Gastrocnemius medialis (tissue), 4 donors: ENCODE measurements at regions of chr2 and their contacts with region 1.

Region 1: GRCh38 chr2:196076778-196077568 is 8.3 kb upstream of the DNAH7 start:
- DNase-seq: no peak
- ATAC-seq: no peak
- H3K4me3 ChIP-seq: no peak overlapping the region
- H3K27ac ChIP-seq: no peak overlapping the region
- H3K4me1 ChIP-seq: no peaks in the 10 kb centered on the region
- H3K27me3 ChIP-seq: no peaks in the 10 kb centered on the region
- CTCF ChIP-seq: no peak
- POLR2A ChIP-seq: no peak

Region 2: GRCh38 chr2:196277002-196277401 is 200.0 kb after region 1 on chr2:
- in situ Hi-C with region 1: loop called in 3 of 4 experiments (anchors 10 to 25 kb)
- intact Hi-C with region 1: loop called (anchors 2 kb)
- DNase-seq: no peak
- ATAC-seq: no peak
- H3K4me3 ChIP-seq: no peak overlapping the region
- H3K27ac ChIP-seq: no peak overlapping the region
- H3K4me1 ChIP-seq: peaks cover 0 to 6% of the 10 kb centered on the region in 2 donors
- H3K27me3 ChIP-seq: no peaks in the 10 kb centered on the region
- CTCF ChIP-seq: peak in 4 of 5 experiments; percentile 6 to 46 (median 25)
- POLR2A ChIP-seq: no peak

Region 3: DNA sequence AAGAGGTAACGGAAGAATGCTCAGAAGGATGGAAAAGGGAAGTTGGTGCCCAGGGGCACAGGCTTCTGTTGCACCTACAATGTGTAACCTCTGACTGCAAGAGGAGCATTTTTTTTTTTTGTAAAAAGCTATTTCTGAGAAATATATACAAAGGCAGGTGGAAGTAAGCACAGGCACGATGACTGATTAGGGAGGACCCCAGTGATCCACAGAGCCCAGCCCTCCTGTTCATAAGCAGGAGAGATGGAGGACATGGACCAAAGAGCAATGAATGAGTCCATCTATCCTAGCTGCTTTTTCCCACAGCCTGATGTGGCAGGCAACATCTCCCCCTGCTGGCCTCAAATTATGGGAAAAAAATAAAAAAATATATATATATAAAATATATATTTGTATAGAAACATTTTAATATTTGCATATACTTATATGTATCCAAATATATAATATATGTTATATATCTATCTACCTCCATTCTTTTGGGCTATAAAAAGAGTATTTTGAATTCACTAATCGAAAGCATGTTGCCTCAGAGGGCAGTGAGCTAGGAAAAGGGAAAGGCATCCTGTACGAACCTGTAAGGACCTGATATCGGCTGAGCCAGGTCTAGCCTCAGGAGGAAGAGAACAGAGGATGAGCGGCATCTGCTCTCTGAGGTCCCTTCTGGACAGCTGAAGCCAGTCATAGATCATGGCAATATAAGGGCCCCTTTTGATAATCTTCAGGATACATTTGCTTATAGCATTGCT is 260.4 kb after region 1 on chr2:
- in situ Hi-C with region 1: loop called in 1 of 4 experiments (anchors 25 kb)
- intact Hi-C with region 1: loop called (anchors 2 kb)
- DNase-seq: no peak
- ATAC-seq: no peak
- H3K4me3 ChIP-seq: no peak overlapping the region
- H3K27ac ChIP-seq: no peak overlapping the region
- H3K4me1 ChIP-seq: no peaks in the 10 kb centered on the region
- H3K27me3 ChIP-seq: no peaks in the 10 kb centered on the region
- CTCF ChIP-seq: peak in 2 of 5 experiments; percentile 26 to 39
- POLR2A ChIP-seq: no peak

Region 4: DNA sequence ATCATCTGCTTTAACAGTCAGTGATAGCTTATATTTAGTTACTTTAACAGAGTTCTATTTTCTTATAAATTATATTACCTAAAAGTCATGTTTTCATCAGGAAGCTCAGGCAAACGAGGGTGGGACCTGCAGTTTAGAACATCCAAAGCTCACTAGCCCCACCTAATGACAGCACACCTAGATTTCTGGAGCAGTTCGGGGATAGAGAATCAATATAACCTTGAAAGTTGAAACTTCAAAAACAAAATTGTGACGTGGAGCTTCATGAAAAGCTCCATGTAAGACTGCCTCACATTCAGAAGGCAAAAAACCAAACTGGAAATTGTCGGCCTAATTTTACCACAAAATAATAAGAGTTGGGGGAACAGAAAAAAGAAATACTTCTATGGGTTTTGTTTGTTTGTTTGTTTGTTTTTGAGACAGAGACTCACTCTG is 376.7 kb after region 1 on chr2:
- in situ Hi-C with region 1: loop called in 1 of 4 experiments (anchors 25 kb)
- intact Hi-C with region 1: loop called (anchors 10 kb)
- DNase-seq: no peak
- ATAC-seq: no peak
- H3K4me3 ChIP-seq: no peak overlapping the region
- H3K27ac ChIP-seq: no peak overlapping the region
- H3K4me1 ChIP-seq: no peaks in the 10 kb centered on the region
- H3K27me3 ChIP-seq: no peaks in the 10 kb centered on the region
- CTCF ChIP-seq: peak in 3 of 5 experiments; percentile 19 to 46 (median 37)
- POLR2A ChIP-seq: no peak

Region 5: GRCh38 chr2:196750982-196751635 is 674.1 kb after region 1 on chr2:
- in situ Hi-C with region 1: no loop called
- intact Hi-C with region 1: loop called (anchors 10 kb)
- DNase-seq: peak in 1 of 2 donors; percentile 22
- ATAC-seq: peak in 1 of 2 donors; percentile 36
- H3K4me3 ChIP-seq: no peak overlapping the region
- H3K27ac ChIP-seq: no peak overlapping the region
- H3K4me1 ChIP-seq: no peaks in the 10 kb centered on the region
- H3K27me3 ChIP-seq: no peaks in the 10 kb centered on the region
- CTCF ChIP-seq: peak in 2 of 5 experiments; percentile 39 to 54
- POLR2A ChIP-seq: no peak